ENCODE measurements at regions of chr15 and their contacts with region 1.

Region 1: GRCh38 chr15:71261909-71262308 is 146.6 kb downstream of the THSD4 start:
- DNase-seq: no peak
- H3K4me3 ChIP-seq: no peak overlapping the region
- H3K27ac ChIP-seq: no peak overlapping the region
- H3K4me1 ChIP-seq: no peaks in the 10 kb centered on the region
- H3K27me3 ChIP-seq: no peaks in the 10 kb centered on the region
- CTCF ChIP-seq: no peak
- EP300 ChIP-seq: no peak
- POLR2A ChIP-seq: no peak

Region 2: DNA sequence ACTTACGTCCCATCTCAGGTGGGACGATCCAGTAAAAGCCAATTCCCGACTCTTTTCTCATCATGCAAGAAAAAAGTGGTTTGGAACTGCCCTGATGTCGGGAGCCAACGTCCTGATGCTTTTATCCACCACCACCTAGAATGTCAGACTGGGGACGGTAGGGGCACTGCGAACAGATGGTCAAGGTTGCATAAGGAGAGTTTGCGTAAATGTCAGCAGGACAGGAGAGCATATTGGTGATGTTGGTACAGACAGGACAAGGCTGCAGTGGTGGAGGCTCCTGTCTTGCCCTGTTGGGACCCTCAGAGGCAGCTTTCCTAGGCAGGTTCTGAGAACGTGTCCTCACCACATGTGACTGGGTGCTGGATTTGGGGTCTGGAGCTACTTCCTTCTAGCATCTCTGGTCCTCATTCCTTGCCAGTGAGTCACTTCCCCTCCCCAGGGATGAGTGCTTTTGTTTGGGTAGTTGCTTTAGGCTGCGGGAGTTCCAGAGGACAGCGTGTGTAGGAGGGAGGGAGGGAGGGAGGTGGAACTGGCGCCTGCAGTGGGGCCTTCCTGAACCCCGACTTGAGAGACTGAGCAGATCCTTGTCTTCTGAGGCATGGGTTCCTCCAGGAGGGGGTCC is 125.6 kb before region 1 on chr15:
- intact Hi-C with region 1: no loop called
- DNase-seq: peak in 1 of 2 donors; percentile 37
- H3K4me3 ChIP-seq: no peak overlapping the region
- H3K27ac ChIP-seq: peak overlapping the region in 1 of 5 donors; percentile 41
- H3K4me1 ChIP-seq: peaks cover 5 to 38% (median 25%) of the 10 kb centered on the region in 4 donors
- H3K27me3 ChIP-seq: no peaks in the 10 kb centered on the region
- CTCF ChIP-seq: no peak
- EP300 ChIP-seq: no peak
- POLR2A ChIP-seq: no peak

Region 3: DNA sequence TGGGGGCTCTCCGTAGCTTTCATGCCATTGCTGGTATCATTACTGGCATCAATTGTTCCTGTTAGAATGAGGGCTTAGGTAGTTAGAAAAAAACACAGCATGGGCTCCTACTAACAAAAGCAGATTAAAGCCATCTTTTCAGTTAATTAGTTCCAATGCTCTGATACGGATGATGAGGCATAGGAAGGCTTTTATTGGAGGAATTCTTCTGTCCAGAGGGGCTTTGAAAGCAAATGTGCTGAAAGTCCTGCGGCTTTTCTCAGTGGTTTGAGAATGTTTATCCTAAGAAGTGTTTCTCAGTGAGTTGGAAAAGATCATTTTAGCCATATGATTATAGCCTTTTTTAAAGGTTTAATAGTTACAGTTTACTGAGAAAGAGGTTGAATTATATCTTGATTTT is 51.9 kb after region 1 on chr15:
- intact Hi-C with region 1: loop called (anchors 10 kb)
- DNase-seq: no peak
- H3K4me3 ChIP-seq: no peak overlapping the region
- H3K27ac ChIP-seq: no peak overlapping the region
- H3K4me1 ChIP-seq: no peaks in the 10 kb centered on the region
- H3K27me3 ChIP-seq: no peaks in the 10 kb centered on the region
- CTCF ChIP-seq: no peak
- EP300 ChIP-seq: no peak
- POLR2A ChIP-seq: no peak

Measured in stomach (tissue), 19 donors.